ENCODE measurements at regions of chr1 and their contacts with region 1.

Region 1: DNA sequence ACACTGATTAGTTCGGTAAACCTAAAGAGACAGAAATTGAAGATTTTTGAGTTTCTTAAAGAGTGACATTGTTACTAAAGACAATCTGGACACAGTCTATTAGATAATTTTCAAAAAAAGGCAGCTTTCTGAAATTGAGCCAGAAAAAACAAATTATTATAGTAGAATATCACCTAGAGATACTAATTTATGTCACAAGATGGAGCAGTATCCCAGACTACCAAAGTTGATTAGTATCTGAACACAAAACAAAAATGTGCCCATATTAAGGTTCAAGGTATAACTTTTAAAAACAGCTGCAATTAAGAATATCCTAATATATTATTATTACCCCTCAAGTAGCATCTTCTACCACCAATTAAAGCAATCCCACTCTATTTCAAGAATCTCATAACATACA is 40.5 kb upstream of the SYT2 start:
- DNase-seq: no peak
- H3K4me3 Mint-ChIP-seq: no peak overlapping the region
- H3K27ac Mint-ChIP-seq: no peak overlapping the region
- H3K4me1 Mint-ChIP-seq: no peaks in the 10 kb centered on the region
- H3K27me3 Mint-ChIP-seq: no peaks in the 10 kb centered on the region
- CTCF ChIP-seq: no peak

Region 2: DNA sequence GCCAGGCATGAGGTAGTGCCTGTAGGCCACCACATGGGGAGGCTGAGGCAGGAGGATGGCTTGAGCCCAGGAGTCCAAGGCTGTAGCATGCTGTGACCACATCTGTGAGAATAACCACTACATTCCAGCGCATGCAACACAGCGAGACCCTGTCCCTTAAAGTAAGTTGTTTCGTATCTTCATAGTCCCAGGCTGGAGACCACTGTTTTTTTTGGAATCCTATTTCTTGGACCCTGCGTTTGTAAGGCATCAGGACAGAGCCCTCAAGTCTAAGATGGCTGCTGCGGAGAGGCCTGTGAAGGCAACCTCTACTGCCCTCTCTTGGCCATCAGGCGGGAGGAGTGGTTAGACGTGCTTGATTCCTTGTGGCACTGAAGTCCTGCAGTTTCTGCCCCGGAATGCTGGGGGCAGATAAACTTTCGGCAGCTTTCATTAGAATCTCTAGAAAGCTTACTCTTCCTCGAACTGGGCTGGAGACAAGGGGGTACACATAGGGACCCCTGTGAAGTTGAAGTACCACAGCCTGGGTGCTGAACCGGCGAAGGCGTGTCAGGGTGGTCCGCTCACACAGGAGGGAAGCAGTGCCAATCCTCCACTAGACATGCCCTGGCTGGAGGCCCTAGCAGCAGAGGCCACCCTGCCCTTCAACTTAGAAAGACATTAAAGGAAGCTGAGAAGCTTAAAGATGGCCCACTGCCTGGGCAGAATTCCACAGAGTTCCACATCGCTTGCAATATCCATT is 101.6 kb after region 1 on chr1:
- CTCF ChIA-PET with region 1: interaction called, 3 read pairs
- intact Hi-C with region 1: loop called (anchors 2 kb)
- DNase-seq: peak; percentile 62
- H3K4me3 Mint-ChIP-seq: no peak overlapping the region
- H3K27ac Mint-ChIP-seq: no peak overlapping the region
- H3K4me1 Mint-ChIP-seq: no peaks in the 10 kb centered on the region
- H3K27me3 Mint-ChIP-seq: no peaks in the 10 kb centered on the region
- CTCF ChIP-seq: peak; percentile 64